ENCODE measurements at regions of chr12 and their contacts with region 1.

Region 1: DNA sequence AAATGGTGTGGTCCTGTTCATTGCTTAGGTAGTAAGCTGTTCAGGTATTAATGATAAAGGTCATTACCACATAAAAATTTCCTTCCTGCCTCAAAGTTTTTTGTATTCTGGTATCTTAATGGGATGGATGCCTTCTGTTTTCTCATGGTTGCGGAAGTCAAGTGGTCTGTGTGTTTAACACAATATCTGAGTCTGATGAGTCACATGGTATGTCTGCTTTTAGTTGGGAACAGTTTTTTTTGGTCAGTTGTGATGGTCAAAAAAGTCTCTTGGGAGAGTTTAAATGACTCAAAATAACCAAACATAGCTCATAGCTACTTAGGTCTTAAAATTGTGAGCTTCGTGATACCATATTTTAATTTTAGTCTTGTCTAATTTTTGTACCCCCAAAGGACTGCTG is 40.7 kb downstream of the STK38L start:
- DNase-seq: no peak
- H3K4me3 Mint-ChIP-seq: no peak overlapping the region
- H3K27ac Mint-ChIP-seq: no peak overlapping the region
- H3K4me1 Mint-ChIP-seq: peaks cover 7% of the 10 kb centered on the region
- H3K27me3 Mint-ChIP-seq: no peaks in the 10 kb centered on the region
- CTCF ChIP-seq: no peak

Region 2: DNA sequence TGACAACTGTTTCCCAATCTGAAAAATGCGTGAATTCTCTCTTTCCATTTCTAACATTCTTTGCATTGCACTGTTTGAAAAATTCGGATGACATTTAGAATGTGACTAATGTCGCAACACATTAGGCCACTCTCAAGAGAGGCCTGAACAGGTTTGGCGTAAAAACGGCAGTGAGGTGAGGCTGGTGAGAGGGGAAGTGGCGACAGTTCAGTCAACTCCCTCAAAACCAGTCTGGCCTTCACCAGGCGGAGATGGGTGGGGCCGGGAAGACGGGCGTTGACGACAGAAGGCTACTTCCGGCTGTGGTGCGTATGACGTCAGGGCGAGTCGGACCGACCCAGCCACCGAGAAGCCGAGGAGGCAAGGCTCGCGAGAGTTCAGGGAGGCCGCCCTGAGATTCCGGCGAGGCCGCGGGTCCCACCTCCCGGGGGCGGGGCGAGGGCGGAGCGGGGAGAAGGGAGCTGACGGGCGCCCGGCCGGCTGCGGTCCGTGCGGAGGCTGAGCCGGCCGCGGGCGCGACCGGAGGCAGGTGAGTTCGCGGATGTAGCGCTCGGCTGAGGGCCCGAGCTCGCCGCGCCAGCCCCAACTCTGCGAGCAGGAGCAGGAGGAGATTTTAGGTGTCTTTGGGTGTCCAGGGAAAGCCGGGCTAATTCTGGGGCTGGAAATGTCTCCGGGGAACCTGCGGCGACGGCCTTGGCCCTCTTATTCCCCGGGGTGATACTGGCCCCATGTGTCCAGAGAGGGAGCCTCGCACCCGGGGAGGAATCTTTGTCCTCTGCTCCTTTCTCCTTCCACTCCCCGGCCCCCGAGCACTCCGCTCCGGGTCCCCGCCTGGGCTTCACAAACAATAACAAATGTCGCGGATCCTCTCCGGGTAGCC is 40.7 kb before region 1 on chr12 and contains the start of gene STK38L:
- CTCF ChIA-PET with region 1: no interaction called
- intact Hi-C with region 1: no loop called
- DNase-seq: peak; percentile 99
- H3K4me3 Mint-ChIP-seq: peak within 1 kb of the TSS; percentile 95
- H3K27ac Mint-ChIP-seq: peak within 1 kb of the TSS; percentile 84
- H3K4me1 Mint-ChIP-seq: peaks cover 16% of the 10 kb centered on the region
- H3K27me3 Mint-ChIP-seq: no peaks in the 10 kb centered on the region
- CTCF ChIP-seq: no peak
- total RNA-seq, gene STK38L: 24.6 and 30.3 TPM in 2 replicates

Region 3: DNA sequence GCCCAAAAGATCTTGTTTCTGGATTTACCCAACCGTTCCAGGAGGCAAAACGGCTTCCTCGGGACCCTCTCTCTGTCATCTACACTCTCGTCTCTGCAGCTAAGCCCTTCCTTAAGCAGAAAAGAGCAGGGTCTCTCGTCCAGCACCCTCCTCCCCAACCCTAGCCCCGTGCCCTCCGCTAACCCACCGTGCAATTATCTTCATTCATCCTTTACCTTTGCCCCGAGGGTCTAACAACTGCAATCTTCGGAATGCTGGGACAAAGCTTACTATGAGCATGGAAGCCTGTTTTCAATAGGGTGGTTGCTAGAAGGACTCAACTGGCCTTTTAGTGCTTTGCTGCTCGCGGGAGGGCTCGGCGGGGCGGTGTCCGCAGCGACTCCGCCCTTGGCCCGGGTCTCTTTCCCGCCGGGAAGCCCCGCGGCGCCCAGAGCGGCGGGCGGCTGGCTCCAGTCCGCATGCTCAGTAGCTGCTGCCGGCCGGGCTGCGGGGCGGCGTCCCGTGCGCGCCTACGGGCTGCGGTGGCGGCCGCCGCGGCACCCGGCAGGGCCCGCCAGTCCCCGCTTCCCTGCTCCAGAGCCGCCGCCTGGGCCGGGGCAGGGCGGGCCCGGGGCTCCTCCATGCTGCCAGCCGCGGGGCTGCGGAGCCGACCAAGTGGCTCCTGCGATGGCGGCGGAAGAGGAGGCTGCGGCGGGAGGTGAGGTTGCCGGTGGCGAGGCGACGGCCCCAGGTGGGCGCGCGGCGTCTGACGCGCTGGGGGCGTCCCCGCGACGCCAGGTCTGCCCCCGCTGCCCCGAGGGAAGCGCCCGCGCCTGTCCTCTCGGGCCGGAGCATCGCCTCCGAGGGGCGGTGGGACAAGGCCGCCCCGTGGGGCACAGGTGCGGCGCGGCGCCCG is 47.9 kb after region 1 on chr12 and contains the start of gene BMAL2:
- CTCF ChIA-PET with region 1: interaction called, 15 read pairs
- intact Hi-C with region 1: no loop called
- DNase-seq: peak; percentile 67
- H3K4me3 Mint-ChIP-seq: peak within 1 kb of the TSS; percentile 81
- H3K27ac Mint-ChIP-seq: peak within 1 kb of the TSS; percentile 98
- H3K4me1 Mint-ChIP-seq: peaks cover 53% of the 10 kb centered on the region
- H3K27me3 Mint-ChIP-seq: no peaks in the 10 kb centered on the region
- CTCF ChIP-seq: no peak
- total RNA-seq, gene BMAL2: 68.2 and 71.2 TPM in 2 replicates

Region 4: DNA sequence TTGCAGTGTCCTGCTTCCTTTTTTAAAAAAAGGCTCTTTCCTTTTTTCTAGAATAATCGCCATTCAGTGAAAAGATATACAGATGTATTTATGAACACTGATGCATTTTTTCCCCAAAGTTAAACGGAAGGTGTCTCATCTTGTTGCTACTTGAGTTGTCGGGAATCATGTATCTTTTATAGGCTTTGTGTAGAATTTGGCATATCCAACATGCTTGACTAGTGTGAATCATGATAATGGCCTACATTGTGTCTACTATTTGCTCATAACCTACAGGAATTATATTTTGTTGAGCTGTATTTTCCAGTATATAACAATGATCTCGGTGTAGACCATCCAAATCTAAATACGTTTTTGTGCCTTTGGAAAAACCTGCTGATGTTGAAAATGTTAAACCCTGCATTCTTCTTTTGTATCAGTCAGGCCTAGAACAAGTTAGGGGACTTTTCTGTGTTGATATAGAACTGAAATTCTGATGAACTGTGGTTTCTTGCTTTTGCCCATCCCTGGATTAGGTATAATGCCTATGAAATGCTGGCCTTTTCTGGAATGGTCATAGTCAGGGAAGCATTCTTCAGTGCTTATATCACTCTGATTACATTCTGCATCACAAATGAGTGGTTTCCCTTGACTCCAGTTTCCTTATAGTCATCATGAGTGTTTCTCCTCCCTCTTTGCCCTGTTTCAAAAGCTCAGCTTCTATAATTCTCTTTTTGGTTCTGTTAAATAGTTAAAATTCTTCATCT is 58.7 kb after region 1 on chr12:
- CTCF ChIA-PET with region 1: no interaction called
- intact Hi-C with region 1: no loop called
- DNase-seq: peak; percentile 32
- H3K4me3 Mint-ChIP-seq: peak overlapping the region; percentile 24
- H3K27ac Mint-ChIP-seq: peak overlapping the region; percentile 96
- H3K4me1 Mint-ChIP-seq: peaks cover 96% of the 10 kb centered on the region
- H3K27me3 Mint-ChIP-seq: no peaks in the 10 kb centered on the region
- CTCF ChIP-seq: no peak

Region 5: GRCh38 chr12:27635349-27635972 is 350.7 kb after region 1 on chr12:
- CTCF ChIA-PET with region 1: no interaction called
- intact Hi-C with region 1: no loop called
- DNase-seq: peak; percentile 12
- H3K4me3 Mint-ChIP-seq: no peak overlapping the region
- H3K27ac Mint-ChIP-seq: no peak overlapping the region
- H3K4me1 Mint-ChIP-seq: peaks cover 8% of the 10 kb centered on the region
- H3K27me3 Mint-ChIP-seq: no peaks in the 10 kb centered on the region
- CTCF ChIP-seq: peak; percentile 35